Activated CD4-positive, alpha-beta T cell treated with anti-CD3 and anti-CD28 coated beads, Interleukin-2, amount 10 ng/mL, durations not matched to agents 24 days and 14 days (primary cell): ENCODE measurements at regions of chr19 and their contacts with region 1.

Region 1: DNA sequence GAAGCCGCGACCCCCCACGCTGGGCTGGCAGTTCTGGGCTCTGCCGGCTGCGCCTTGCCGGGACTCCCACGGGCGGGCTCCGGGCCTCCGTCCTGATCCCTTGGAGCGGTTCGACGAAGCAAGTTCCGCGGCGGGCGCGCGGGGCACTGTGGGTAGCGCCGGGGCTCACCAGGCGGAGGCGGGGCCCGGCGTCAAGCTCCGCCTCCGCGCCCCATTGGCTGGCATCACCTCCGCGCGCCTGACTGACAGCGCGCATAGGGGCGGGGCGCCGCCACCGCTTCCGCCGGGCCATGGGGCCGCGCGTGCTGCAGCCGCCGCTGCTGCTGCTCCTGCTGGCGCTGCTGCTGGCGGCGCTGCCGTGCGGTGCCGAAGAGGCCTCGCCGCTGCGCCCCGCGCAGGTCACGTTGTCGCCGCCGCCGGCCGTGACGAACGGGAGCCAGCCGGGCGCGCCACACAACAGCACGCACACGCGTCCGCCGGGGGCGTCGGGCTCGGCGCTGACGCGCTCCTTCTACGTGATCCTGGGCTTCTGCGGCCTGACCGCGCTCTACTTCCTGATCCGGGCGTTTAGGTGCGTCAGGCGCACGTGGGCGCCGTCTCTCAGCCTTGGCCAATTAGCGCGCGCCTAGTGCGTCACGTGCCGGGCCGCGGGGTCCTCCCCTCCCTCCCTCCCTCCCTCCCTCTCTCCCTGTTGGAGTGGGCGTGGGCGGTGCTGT is at the start of gene FAM174C:
- DNase-seq: peak; percentile 98
- H3K4me3 Mint-ChIP-seq: peak within 1 kb of the TSS; percentile 84
- H3K27ac Mint-ChIP-seq: peak within 1 kb of the TSS; percentile 92
- H3K4me1 Mint-ChIP-seq: peaks cover 45% of the 10 kb centered on the region
- H3K27me3 Mint-ChIP-seq: no peaks in the 10 kb centered on the region
- total RNA-seq, gene FAM174C: 115 and 126 TPM in 2 replicates

Region 2: DNA sequence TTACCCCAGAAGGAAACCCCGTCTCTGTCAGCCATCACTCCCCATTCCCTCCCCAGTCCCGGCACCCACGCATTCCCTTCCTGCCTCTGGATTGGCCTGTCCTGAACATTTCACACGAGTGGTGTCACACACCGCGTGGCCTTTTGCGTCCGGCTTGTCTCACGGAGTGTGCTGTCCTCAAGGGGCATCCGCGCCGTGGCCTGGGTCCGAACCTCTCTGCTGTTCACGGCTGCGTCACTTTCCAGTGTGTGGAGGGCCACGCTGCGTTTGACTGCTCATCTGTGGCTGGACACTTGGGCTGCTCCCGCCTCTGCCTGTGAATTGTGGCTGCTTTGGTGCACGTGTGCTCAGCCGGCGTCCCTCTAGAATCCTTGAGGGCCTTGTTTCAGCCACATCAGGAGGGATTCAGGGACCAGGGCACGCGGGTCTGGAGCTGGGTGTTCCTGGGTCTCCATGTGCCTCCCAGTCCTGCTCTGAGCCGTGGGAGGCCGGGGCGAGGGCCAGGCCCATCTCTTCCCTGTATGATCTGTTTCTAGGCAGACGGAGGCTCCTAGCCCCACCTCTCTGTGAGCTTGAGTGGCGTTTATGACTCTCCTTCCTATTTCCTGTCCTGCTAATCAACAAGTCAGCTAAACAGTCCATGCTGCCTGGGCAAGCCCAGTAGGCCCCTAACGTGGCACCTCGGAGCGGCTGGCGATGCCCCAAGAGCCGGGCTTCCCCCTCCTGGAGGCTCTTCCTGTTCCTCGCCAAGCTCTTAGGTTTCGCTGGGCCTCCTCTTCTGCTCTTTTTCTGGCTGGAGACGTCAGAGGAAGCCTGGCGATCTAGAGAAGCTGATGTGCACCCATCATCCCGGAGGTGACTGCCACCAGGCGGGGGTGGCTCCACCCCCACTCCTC is 61.8 kb before region 1 on chr19:
- intact Hi-C with region 1: no loop called
- DNase-seq: peak; percentile 87
- H3K4me3 Mint-ChIP-seq: peak overlapping the region; percentile 82
- H3K27ac Mint-ChIP-seq: peak overlapping the region; percentile 99
- H3K4me1 Mint-ChIP-seq: peaks cover 20% of the 10 kb centered on the region
- H3K27me3 Mint-ChIP-seq: no peaks in the 10 kb centered on the region

Region 3: GRCh38 chr19:1360818-1361461 is 85.5 kb after region 1 on chr19:
- intact Hi-C with region 1: loop called (anchors 5 kb)
- DNase-seq: no peak
- H3K4me3 Mint-ChIP-seq: no peak overlapping the region
- H3K27ac Mint-ChIP-seq: no peak overlapping the region
- H3K4me1 Mint-ChIP-seq: peaks cover 21% of the 10 kb centered on the region
- H3K27me3 Mint-ChIP-seq: no peaks in the 10 kb centered on the region

Region 4: DNA sequence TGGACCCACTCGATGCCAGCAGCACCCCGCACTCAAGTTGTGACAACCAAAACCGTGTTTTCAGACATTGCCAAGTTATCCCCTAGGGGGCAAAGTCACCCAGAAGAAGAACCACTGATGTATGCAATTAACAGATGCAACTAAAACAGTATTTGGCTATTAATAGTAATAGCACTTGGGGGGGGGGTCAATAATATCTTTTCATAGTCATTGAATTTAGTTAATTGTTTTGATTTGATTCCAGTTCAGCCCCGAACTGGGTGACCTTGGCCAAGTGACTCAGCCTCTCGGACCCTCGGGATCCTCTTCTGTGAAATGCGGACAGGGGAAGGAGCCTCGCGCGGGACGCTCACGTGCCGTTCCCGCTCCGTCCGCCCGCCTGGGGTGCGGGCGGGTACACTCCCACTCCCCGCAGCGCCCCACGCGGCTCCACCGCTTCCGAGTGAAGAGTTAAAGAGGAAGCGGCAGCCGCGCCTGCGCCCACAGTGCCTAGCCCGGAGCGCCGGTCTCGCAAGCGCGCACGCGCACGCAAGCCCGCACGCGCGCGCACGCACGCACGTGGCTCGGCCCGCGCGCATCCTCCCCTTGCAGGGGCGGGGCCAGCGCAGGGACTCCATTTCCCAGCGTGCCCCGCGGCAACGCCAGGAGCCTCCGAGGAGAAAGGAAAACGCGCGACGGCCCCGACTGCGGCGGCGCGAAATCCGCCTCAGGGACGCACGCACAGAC is 131.5 kb after region 1 on chr19:
- intact Hi-C with region 1: loop called (anchors 5 kb)
- DNase-seq: peak; percentile 100
- H3K4me3 Mint-ChIP-seq: peak overlapping the region; percentile 76
- H3K27ac Mint-ChIP-seq: peak overlapping the region; percentile 81
- H3K4me1 Mint-ChIP-seq: peaks cover 37% of the 10 kb centered on the region
- H3K27me3 Mint-ChIP-seq: peaks cover 6% of the 10 kb centered on the region